ENCODE measurements at regions of chr10 and their contacts with region 1.

Region 1: GRCh38 chr10:59913547-59914237 is 7.3 kb upstream of the CCDC6 start:
- DNase-seq: no peak
- ATAC-seq: no peak
- H3K4me3 ChIP-seq: no peak overlapping the region
- H3K27ac ChIP-seq: no peak overlapping the region
- H3K4me1 ChIP-seq: no peaks in the 10 kb centered on the region
- H3K27me3 ChIP-seq: no peaks in the 10 kb centered on the region

Region 2: DNA sequence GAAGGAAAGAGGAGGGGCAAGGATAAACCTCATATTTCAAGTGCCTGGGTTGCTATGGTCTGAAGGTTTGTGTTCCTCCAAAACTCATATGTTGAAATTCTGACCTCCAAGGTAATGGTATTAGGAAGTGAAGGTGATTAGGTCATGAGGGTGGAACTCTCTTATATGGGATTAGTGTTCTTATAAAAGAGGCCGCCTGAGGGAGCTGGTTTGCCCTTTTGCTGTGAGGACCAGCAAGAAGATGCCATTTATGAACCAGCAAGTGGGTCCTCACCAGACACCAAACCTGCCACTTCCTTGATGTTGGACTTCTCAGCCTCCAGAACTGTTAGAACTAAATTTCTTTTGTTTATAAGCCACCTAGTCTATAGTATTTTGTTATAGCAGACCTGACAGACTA is 309.2 kb before region 1 on chr10:
- intact Hi-C with region 1: no loop called
- DNase-seq: no peak
- ATAC-seq: no peak
- H3K4me3 ChIP-seq: no peak overlapping the region
- H3K27ac ChIP-seq: no peak overlapping the region
- H3K4me1 ChIP-seq: no peaks in the 10 kb centered on the region
- H3K27me3 ChIP-seq: no peaks in the 10 kb centered on the region

Region 3: GRCh38 chr10:60032723-60033122 is 119.0 kb after region 1 on chr10:
- intact Hi-C with region 1: loop called in 1 of 4 experiments (anchors 10 kb)
- DNase-seq: peak in 1 of 3 donors; percentile 56
- ATAC-seq: peak; percentile 89 to 92
- H3K4me3 ChIP-seq: no peak overlapping the region
- H3K27ac ChIP-seq: no peak overlapping the region
- H3K4me1 ChIP-seq: peaks cover 2% of the 10 kb centered on the region
- H3K27me3 ChIP-seq: no peaks in the 10 kb centered on the region

Measured in right cardiac atrium (tissue), 5 donors.